ENCODE measurements at regions of chr1 and their contacts with region 1.

Region 1: DNA sequence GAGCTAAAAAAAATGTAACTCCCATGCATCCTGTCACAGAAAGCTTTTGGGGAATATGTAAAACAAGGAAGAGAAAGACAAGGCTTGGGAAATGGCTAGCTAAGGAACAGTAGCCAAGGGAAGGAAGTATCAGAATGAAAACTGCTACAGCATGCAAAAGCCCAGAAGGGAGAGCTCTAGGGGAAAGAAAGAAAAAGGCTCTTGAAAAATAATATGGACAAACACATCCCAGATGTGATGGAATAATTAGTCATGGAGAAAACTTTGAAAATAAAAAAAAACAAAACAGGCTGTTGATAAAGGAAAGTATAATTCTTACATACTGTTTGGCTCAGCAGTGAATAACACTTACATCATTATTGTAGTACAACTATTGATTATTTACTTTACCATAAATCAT is 47.9 kb upstream of the VCAM1 start:
- DNase-seq: no peak
- ATAC-seq: no peak
- H3K4me3 ChIP-seq: no peak overlapping the region
- H3K4me3 Mint-ChIP-seq: no peak overlapping the region
- H3K27ac ChIP-seq: no peak overlapping the region
- H3K27ac Mint-ChIP-seq: no peak overlapping the region
- H3K4me1 ChIP-seq: no peaks in the 10 kb centered on the region
- H3K4me1 Mint-ChIP-seq: no peaks in the 10 kb centered on the region
- H3K27me3 ChIP-seq: no peaks in the 10 kb centered on the region
- H3K27me3 Mint-ChIP-seq: peaks cover 7% of the 10 kb centered on the region
- CTCF ChIP-seq: no peak

Region 2: GRCh38 chr1:100699744-100700143 is 28.1 kb after region 1 on chr1:
- CTCF ChIA-PET with region 1: no interaction called
- POLR2A ChIA-PET with region 1: no interaction called
- intact Hi-C with region 1: loop called in 1 of 2 experiments (anchors 1 kb)
- DNase-seq: no peak
- ATAC-seq: no peak
- H3K4me3 ChIP-seq: no peak overlapping the region
- H3K4me3 Mint-ChIP-seq: no peak overlapping the region
- H3K27ac ChIP-seq: no peak overlapping the region
- H3K27ac Mint-ChIP-seq: no peak overlapping the region
- H3K4me1 ChIP-seq: no peaks in the 10 kb centered on the region
- H3K4me1 Mint-ChIP-seq: no peaks in the 10 kb centered on the region
- H3K27me3 ChIP-seq: no peaks in the 10 kb centered on the region
- H3K27me3 Mint-ChIP-seq: peaks cover 10% of the 10 kb centered on the region
- CTCF ChIP-seq: no peak